HEK293 (cell line): ENCODE measurements at regions of chr20 and their contacts with region 1.

Region 1: GRCh38 chr20:59782986-59783640 is 150.3 kb downstream of the SYCP2 start:
- H3K4me3 ChIP-seq: no peak overlapping the region
- H3K27ac ChIP-seq: no peak overlapping the region
- H3K4me1 ChIP-seq: no peaks in the 10 kb centered on the region
- CTCF ChIP-seq: peak; percentile 81

Region 2: DNA sequence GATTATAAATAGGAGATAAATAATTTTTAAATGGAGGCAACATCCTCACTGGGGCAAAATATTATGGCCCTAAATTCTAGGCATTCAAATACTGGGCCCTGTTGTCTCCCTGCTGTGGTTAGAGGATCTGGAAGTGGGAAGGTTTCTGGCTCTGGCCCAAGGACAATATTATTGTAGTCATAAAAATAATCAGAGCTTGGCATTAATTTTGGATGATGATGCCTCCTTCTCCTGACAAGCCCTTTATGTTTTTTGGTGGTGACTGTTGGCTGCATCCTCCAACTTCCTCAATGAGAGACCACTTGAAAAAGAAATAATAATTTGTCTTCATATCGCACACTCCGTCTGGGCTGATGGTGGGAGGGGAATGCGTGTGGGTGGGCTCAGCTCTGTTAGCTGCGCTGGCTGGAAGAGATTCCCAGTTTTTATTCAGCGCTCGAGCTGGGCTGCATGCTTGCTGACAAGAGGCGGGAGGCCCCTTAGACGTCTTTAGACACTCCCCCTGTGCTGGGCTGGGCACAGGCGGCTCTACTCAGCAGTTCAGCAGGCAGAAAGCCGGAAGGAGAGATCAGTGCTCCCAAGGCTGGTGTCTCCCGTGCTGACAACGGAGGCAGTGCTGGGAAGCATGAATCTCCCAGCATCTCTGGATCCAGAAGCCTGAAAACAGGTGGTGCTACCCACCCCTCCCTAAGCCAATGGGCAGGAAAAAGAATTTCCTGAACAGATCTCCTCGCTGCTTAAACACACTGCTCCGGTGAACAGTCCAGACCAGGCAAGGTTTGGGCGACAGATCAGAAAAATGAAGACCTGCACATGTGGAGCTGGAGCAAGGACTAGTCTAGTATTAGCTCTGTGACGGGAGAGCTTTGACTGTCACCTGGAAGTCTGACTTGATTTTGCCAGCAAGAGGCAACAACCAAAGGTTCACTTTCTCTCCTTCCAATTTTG is 52.6 kb after region 1 on chr20:
- CTCF ChIA-PET with region 1: interaction called, 25 read pairs
- POLR2A ChIA-PET with region 1: no interaction called
- H3K4me3 ChIP-seq: peak overlapping the region; percentile 16
- H3K27ac ChIP-seq: peak overlapping the region; percentile 77
- H3K4me1 ChIP-seq: peaks cover 22% of the 10 kb centered on the region
- CTCF ChIP-seq: no peak